Activated naive CD8-positive, alpha-beta T cell treated with anti-CD3 and anti-CD28 coated beads, Interleukin-2, amount 10 ng/mL, durations not matched to agents 7 days and 5 days (primary cell): ENCODE measurements at regions of chr16 and their contacts with region 1.

Region 1: DNA sequence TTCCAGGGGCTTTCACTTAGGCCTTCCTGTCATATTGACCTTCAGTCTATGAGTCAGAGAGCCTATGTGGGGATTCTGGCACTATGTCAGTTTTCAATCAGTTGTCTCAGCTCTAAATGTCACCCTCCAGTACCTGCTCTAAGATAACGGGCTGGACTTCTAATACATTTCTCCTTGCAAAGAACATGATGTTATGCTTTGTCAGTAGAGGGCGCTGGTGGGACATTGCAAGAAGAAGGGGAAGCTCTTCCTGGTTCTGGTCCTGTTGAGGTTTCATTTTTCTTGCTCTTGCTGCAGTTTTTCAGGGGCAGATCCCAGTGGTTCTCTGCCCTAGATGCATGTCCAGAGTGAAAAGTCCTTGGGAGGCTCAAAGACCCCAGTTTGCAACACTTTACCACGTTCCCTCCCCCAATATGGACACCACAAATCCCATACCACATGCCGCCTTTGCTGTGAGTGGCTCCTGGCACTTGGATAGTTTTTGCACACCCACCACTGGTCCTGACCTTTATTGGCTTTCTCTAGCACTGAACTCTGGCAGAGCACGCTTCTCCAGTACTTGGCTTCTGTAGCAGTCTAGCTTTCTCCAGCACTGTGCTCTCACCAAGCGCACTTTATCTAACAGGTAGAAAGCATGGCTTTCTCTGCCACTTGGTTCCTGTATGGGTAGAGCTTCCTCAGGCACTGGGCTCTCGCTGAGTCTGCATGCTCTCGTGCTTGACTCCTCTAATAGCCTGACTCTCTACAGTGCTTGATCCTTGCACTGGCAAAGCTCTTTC is 49.0 kb downstream of the BCL7C start:
- DNase-seq: peak; percentile 65
- ATAC-seq: peak; percentile 91
- H3K4me3 Mint-ChIP-seq: peak overlapping the region; percentile 55
- H3K27ac Mint-ChIP-seq: peak overlapping the region; percentile 75
- H3K4me1 Mint-ChIP-seq: peaks cover 12% of the 10 kb centered on the region
- H3K27me3 Mint-ChIP-seq: peaks cover 2% of the 10 kb centered on the region

Region 2: GRCh38 chr16:30874821-30875717 is 30.2 kb after region 1 on chr16:
- POLR2A ChIA-PET with region 1: interaction called, 25 read pairs
- DNase-seq: peak; percentile 93
- ATAC-seq: peak; percentile 88
- H3K4me3 Mint-ChIP-seq: peak overlapping the region; percentile 98
- H3K27ac Mint-ChIP-seq: peak overlapping the region; percentile 94
- H3K4me1 Mint-ChIP-seq: peaks cover 16% of the 10 kb centered on the region
- H3K27me3 Mint-ChIP-seq: no peaks in the 10 kb centered on the region